Left ventricle myocardium superior (tissue), 1 donor: ENCODE measurements at regions of chr21 and their contacts with region 1.

Region 1: GRCh38 chr21:29372063-29372802 is 73.5 kb downstream of the BACH1 start:
- DNase-seq: no peak
- ATAC-seq: peak; percentile 94

Region 2: GRCh38 chr21:29085106-29085752 is 287.0 kb before region 1 on chr21:
- intact Hi-C with region 1: loop called (anchors 5 kb)
- DNase-seq: no peak
- ATAC-seq: no peak

Region 3: GRCh38 chr21:29546071-29546470 is 173.8 kb after region 1 on chr21:
- intact Hi-C with region 1: no loop called
- DNase-seq: no peak
- ATAC-seq: no peak

Region 4: GRCh38 chr21:29647353-29647781 is 275.1 kb after region 1 on chr21:
- intact Hi-C with region 1: no loop called
- DNase-seq: no peak
- ATAC-seq: no peak